Mammary epithelial cell (primary cell): ENCODE measurements at regions of chr11 and their contacts with region 1.

Region 1: GRCh38 chr11:83033972-83034672 is 37.6 kb downstream of the RAB30 start:
- DNase-seq: peak; percentile 43
- H3K4me3 ChIP-seq: peak overlapping the region in 1 of 3 experiments; percentile 34
- H3K27ac ChIP-seq: peak overlapping the region; percentile 5
- H3K4me1 ChIP-seq: peaks cover 26% of the 10 kb centered on the region
- H3K27me3 ChIP-seq: no peaks in the 10 kb centered on the region
- CTCF ChIP-seq: no peak

Region 2: DNA sequence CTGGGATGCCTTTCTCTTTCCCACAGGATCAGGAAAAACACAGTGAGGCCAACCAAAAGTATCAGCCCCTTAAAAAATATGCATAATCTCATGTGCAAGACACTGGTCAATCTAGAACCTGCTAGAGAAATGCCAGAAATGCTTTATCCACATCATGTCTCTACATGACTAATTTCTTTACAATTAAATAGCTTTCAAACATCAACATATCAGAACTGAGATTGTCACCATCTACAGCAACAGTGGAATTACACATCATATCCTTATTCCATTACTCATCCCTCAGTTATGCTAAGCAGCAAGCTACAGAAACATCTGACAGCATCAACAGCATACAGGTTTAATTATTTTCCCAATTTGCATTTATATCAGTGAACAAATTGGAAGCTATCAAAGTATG is 53.8 kb before region 1 on chr11:
- CTCF ChIA-PET with region 1: no interaction called
- dilution Hi-C with region 1: no loop called
- in situ Hi-C with region 1: no loop called
- intact Hi-C with region 1: loop called (anchors 2 kb)
- DNase-seq: peak; percentile 80
- H3K4me3 ChIP-seq: no peak overlapping the region
- H3K27ac ChIP-seq: peak overlapping the region; percentile 75
- H3K4me1 ChIP-seq: peaks cover 28% of the 10 kb centered on the region
- H3K27me3 ChIP-seq: no peaks in the 10 kb centered on the region
- CTCF ChIP-seq: no peak